Aorta (tissue), 5 donors: ENCODE measurements at regions of chrX and their contacts with region 1.

Region 1: DNA sequence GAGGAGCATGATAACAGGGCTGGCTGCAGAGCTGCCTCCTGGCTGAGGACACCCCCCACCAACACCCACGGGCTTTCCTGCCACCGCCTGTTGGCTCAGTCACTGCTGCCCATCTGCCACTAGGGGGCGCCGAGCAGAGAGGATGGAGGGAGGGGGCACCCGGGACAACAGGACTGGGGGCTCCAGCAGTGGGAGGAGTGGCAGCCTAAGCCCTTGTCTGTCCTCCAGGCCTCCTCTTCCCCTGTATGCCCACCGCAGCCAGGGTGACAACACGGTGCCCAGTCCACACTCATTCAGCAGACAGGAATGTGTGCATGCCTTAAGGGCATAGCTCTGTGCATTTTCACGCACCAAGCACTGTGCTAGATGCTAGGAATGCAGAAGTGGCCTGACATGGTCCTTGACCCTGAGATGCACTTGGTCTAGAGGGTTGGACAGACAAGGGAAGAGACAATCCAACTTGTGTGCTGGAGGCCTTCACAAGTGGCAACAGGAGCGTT is 149.9 kb downstream of the AMMECR1 start:
- DNase-seq: no peak
- ATAC-seq: peak; percentile 33
- H3K4me3 ChIP-seq: no peak overlapping the region
- H3K27ac ChIP-seq: no peak overlapping the region
- H3K4me1 ChIP-seq: no peaks in the 10 kb centered on the region
- H3K27me3 ChIP-seq: no peaks in the 10 kb centered on the region

Region 2: GRCh38 chrX:110317820-110318658 is 150.0 kb after region 1 on chrX and contains the start of gene AMMECR1:
- intact Hi-C with region 1: loop called in 1 of 2 experiments (anchors 10 kb)
- DNase-seq: peak; percentile 85 to 91
- ATAC-seq: peak; percentile 93
- H3K4me3 ChIP-seq: peak within 1 kb of the TSS; percentile 70 to 79
- H3K27ac ChIP-seq: peak within 1 kb of the TSS in 1 of 2 donors; percentile 64
- H3K4me1 ChIP-seq: no peaks in the 10 kb centered on the region
- H3K27me3 ChIP-seq: no peaks in the 10 kb centered on the region
- total RNA-seq, gene AMMECR1: 3.6 to 4.0 TPM

Region 3: GRCh38 chrX:110722135-110722534 is 554.1 kb after region 1 on chrX:
- intact Hi-C with region 1: no loop called
- DNase-seq: no peak
- ATAC-seq: no peak
- H3K4me3 ChIP-seq: no peak overlapping the region
- H3K27ac ChIP-seq: no peak overlapping the region
- H3K4me1 ChIP-seq: no peaks in the 10 kb centered on the region
- H3K27me3 ChIP-seq: no peaks in the 10 kb centered on the region